Stomach (tissue), 19 donors: ENCODE measurements at regions of chr15 and their contacts with region 1.

Region 1: GRCh38 chr15:35293353-35294130 is 208.4 kb upstream of the NANOGP8 start:
- DNase-seq: no peak
- H3K4me3 ChIP-seq: no peak overlapping the region
- H3K27ac ChIP-seq: no peak overlapping the region
- H3K4me1 ChIP-seq: peaks cover 0 to 10% (median 0%) of the 10 kb centered on the region in 4 donors
- H3K27me3 ChIP-seq: no peaks in the 10 kb centered on the region
- CTCF ChIP-seq: peak in 1 of 7 experiments; percentile 7
- EP300 ChIP-seq: no peak
- POLR2A ChIP-seq: no peak

Region 2: GRCh38 chr15:35444557-35445204 is 151.1 kb after region 1 on chr15:
- intact Hi-C with region 1: loop called (anchors 10 kb)
- DNase-seq: peak in 1 of 2 donors; percentile 54
- H3K4me3 ChIP-seq: no peak overlapping the region
- H3K27ac ChIP-seq: no peak overlapping the region
- H3K4me1 ChIP-seq: no peaks in the 10 kb centered on the region
- H3K27me3 ChIP-seq: no peaks in the 10 kb centered on the region
- CTCF ChIP-seq: peak in 5 of 7 experiments; percentile 26 to 65 (median 48)
- EP300 ChIP-seq: no peak
- POLR2A ChIP-seq: no peak